Sigmoid colon (tissue), 7 donors: ENCODE measurements at regions of chr12 and their contacts with region 1.

Region 1: GRCh38 chr12:68686595-68687521 is at the start of gene NUP107:
- DNase-seq: peak; percentile 100
- H3K4me3 ChIP-seq: peak within 1 kb of the TSS; percentile 73 to 88 (median 78)
- H3K27ac ChIP-seq: peak within 1 kb of the TSS; percentile 73 to 85 (median 83)
- H3K4me1 ChIP-seq: peaks cover 0 to 24% (median 16%) of the 10 kb centered on the region in 4 donors
- H3K27me3 ChIP-seq: no peaks in the 10 kb centered on the region
- CTCF ChIP-seq: peak in 1 of 4 experiments; percentile 38
- EP300 ChIP-seq: peak in 1 of 4 donors; percentile 41
- POLR2A ChIP-seq: peak in 1 of 2 donors; percentile 33
- total RNA-seq, gene NUP107: 24.2 to 34.3 (median 31.0) TPM

Region 2: DNA sequence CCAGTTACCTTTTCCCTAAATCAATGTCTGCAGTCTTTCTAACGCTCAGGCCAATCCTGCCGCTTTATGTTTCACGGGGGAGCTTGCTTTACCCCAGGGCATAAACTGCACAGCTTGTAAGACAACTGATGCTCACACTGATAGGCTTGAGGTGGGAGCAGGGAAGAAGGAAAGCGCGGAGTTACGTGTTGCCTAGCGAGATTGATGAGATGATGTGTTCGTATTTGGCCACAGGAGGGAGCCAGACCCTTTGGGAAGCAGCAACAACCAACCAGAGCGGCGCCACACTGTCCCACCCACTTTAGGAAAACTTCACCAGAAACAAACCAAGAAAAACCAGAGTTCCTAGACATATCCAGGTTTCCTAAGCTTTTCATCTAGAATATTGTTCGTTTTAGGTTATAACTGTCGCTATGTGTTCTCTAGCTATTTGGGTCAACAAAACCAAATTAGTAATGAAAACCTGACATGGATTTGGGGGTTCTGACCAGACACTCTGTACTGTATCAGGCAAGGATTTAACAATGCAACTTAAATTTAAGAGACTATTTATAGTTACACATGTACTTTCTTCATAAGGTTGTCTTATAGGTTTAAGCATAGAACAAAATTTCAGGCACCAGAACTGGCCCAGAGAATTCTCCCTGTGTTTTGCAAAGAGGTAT is 463.6 kb before region 1 on chr12:
- intact Hi-C with region 1: loop called (anchors 5 kb)
- DNase-seq: peak; percentile 93
- H3K4me3 ChIP-seq: no peak overlapping the region
- H3K27ac ChIP-seq: peak overlapping the region in 3 of 4 donors; percentile 8 to 67 (median 66)
- H3K4me1 ChIP-seq: peaks cover 0 to 48% (median 21%) of the 10 kb centered on the region in 4 donors
- H3K27me3 ChIP-seq: no peaks in the 10 kb centered on the region
- CTCF ChIP-seq: peak; percentile 79 to 84 (median 80)
- EP300 ChIP-seq: no peak
- POLR2A ChIP-seq: no peak

Region 3: DNA sequence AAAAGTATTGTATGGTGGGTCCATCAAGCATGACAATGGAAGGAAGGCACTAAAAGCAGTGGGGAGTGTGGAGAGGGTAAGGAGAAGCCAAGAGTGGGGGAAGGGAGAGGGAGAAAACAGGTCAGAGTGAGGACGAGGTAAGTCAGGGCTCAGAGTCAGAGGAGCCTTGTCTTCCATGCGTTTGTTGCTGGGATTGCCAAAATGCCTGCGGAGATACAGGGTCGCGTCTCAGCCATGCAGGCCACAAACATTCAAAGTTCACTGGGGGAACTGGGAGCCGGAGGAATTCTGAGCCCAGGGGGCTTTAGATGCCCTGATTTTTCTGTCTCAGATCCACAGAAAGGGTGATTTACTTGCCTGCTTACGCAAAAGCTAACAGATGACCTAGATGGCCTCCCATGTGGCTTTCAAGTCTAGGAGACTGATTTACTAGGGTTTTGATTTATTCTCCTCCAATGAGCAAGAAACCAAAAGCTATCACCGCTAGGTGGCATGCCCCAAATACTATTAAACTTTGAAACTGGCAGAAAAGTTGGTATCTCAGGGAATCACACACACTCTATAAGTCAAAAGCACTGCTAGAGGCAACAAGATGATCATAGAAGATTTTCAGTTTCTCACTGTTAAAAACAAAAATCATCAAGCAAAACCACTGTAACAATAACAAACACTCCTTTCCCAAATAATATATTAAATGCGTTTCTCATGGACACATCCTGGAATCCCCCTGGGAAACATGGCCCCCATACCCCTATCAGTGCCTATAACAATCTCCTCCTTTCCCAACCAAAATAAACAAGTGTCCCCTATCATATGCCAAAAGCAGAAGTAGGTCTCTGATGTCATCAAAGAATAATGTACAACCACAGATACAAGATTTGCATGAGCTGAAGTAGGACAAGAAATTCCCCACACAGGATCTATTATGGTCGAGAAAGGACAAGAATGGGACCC is 328.0 kb before region 1 on chr12:
- intact Hi-C with region 1: loop called (anchors 2 kb)
- DNase-seq: peak; percentile 80
- H3K4me3 ChIP-seq: no peak overlapping the region
- H3K27ac ChIP-seq: peak overlapping the region in 2 of 4 donors; percentile 54 to 68
- H3K4me1 ChIP-seq: peaks cover 0 to 23% (median 13%) of the 10 kb centered on the region in 4 donors
- H3K27me3 ChIP-seq: no peaks in the 10 kb centered on the region
- CTCF ChIP-seq: peak; percentile 37 to 71 (median 62)
- EP300 ChIP-seq: no peak
- POLR2A ChIP-seq: no peak

Region 4: DNA sequence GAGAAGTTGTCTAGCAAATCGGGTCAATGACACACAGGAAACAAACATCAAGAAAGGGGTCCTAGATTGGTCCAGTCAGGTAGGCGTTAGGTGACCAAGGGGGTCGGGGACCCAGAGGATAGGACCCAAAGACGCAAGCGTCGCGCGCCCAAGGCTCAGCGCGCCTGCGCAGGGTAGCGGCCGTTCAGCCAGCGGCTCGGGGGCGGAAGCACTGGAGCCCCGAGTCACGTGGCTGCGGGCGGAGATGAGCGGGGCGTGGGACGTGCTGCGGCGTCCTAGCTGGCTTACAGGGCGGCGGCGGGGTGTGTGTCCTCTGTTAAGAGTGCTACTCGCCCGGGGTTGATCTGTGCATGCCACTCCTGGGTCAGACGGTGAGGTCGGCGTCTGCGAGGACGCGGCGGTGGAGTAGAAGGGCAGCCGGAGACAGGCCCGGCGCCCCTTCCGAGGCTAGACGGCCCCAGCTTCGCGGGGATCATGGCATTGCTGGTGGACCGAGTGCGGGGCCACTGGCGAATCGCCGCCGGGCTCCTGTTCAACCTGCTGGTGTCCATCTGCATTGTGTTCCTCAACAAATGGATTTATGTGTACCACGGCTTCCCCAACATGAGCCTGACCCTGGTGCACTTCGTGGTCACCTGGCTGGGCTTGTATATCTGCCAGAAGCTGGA is 59.2 kb after region 1 on chr12 and contains the start of gene SLC35E3:
- intact Hi-C with region 1: loop called (anchors 5 kb)
- DNase-seq: peak; percentile 95
- H3K4me3 ChIP-seq: peak within 1 kb of the TSS; percentile 63 to 77 (median 66)
- H3K27ac ChIP-seq: peak within 1 kb of the TSS; percentile 79 to 83 (median 82)
- H3K4me1 ChIP-seq: peaks cover 0 to 21% (median 18%) of the 10 kb centered on the region in 4 donors
- H3K27me3 ChIP-seq: no peaks in the 10 kb centered on the region
- CTCF ChIP-seq: no peak
- EP300 ChIP-seq: no peak
- POLR2A ChIP-seq: peak; percentile 6 to 83
- total RNA-seq, gene SLC35E3: 1.1 to 5.3 (median 2.6) TPM

Region 5: GRCh38 chr12:68807576-68808387 is 120.9 kb after region 1 on chr12 and contains the start of gene MDM2:
- intact Hi-C with region 1: loop called (anchors 2 kb)
- DNase-seq: peak; percentile 97
- H3K4me3 ChIP-seq: peak within 1 kb of the TSS; percentile 61 to 98 (median 86)
- H3K27ac ChIP-seq: peak within 1 kb of the TSS; percentile 92 to 100 (median 98)
- H3K4me1 ChIP-seq: peaks cover 0 to 33% (median 26%) of the 10 kb centered on the region in 4 donors
- H3K27me3 ChIP-seq: no peaks in the 10 kb centered on the region
- CTCF ChIP-seq: peak; percentile 77 to 82 (median 78)
- EP300 ChIP-seq: no peak
- POLR2A ChIP-seq: peak; percentile 90 to 92
- total RNA-seq, gene MDM2: 44.2 to 55.4 (median 47.8) TPM